ENCODE measurements at regions of chr9 and their contacts with region 1.

Region 1: DNA sequence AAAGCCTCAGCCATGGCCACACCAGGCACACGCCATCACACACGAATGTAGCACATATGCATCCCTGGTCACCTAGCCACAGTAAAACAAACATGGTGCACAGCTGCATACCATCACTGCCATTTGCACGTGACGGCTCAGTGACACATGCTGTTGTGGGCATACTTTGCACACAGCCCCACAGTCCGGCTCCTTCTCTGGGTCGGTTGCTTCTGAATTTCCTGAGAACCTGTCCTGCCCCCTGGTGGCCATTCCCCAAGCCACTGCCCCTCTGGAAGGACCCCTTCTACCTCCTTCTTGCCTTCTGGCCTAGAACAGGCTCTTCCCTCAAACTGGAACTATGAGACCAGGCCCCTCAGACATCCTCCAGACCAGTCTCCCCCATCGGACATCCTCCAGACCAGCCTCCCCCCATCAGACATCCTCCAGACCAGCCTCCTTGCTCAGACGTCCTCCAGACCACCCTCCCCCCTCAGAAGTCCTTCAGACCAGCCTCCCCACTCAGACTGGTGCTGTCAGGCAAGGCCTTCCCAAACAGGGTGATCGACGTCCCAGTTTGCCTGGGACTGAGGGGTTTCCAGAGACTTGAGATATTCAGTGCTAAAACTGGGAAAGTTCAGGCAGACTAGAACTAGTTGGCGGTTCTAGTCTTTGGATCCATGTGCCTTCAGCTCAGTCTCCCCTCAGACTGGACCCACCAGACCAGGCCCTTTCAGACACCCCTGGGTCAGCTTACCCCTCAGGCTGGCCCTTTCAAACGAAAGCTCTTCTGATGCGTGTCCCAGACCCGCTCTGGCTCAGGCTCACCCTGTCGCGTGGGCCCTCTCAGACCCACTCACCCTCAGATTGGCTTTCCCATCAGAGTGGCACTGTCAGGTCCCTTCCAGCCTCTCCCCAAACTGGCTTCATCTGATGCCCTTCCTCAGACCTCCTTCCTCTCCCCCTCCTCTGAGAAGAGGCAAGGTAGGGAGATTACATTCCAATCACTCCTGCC is 24.3 kb upstream of the ENHO start:
- DNase-seq: peak; percentile 78
- ATAC-seq: peak; percentile 83
- H3K4me3 ChIP-seq: no peak overlapping the region
- H3K27ac ChIP-seq: no peak overlapping the region
- H3K4me1 ChIP-seq: peaks cover 0 to 4% of the 10 kb centered on the region in 2 experiments; a peak in 2 of 4 replicates
- H3K27me3 ChIP-seq: no peaks in the 10 kb centered on the region
- CTCF ChIP-seq: peak; percentile 75 to 87 (median 86); a peak in 5 of 6 replicates
- POLR2A ChIP-seq: no peak
- RAD21 ChIP-seq: peak; percentile 77

Region 2: DNA sequence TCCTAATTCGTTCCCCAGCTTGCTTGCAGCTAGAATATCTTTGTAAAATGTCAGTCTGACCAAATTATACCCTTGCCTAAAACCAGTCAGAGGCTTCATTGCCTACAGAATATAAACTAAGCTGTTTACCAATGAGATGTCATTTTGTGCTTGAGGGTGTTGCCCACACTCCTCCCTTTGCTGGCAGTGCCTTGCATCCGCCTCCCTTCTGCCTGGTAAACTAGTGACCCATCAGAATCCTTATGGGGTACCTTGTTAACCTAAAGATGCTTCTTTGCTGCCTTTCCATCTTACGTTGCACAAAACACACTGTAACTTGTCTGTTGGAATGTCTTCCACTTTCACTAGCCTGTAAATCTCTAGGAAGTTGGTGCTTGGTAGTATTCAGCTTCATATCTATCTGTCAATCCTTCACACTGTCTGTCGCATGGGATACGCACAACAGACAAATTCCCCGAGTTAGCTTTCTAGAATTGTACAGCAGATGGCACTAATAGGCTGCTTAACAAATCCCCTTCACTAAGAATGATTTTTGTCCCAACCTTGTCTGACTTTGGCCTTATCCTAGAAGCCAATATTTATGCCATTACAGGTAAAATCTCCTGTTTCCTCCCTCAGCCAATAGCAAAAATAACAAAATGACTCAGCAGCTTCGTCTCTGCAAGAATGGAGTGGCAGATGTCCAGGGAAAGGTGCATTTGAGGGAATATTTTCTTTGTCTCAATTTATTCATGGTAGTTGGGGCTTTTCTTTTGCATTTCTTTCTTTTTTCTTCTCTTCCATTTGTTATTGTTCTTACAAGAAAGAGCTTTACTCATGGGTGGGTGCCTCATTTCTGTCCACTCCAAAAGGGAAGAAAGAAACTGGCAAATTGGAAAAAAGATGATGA is 214.8 kb before region 1 on chr9:
- CTCF ChIA-PET with region 1: no interaction called
- POLR2A ChIA-PET with region 1: no interaction called
- RAD21 ChIA-PET with region 1: no interaction called
- intact Hi-C with region 1: loop called (anchors 5 kb)
- DNase-seq: peak; percentile 28
- ATAC-seq: no peak
- H3K4me3 ChIP-seq: no peak overlapping the region
- H3K27ac ChIP-seq: no peak overlapping the region
- H3K4me1 ChIP-seq: peaks cover 8 to 23% of the 10 kb centered on the region in 2 experiments; a peak in 3 of 4 replicates
- H3K27me3 ChIP-seq: no peaks in the 10 kb centered on the region
- CTCF ChIP-seq: peak; percentile 40 to 71 (median 58)
- POLR2A ChIP-seq: no peak
- RAD21 ChIP-seq: peak; percentile 81

Region 3: GRCh38 chr9:34403554-34404380 is 143.4 kb before region 1 on chr9:
- CTCF ChIA-PET with region 1: interaction called, 16 read pairs
- POLR2A ChIA-PET with region 1: no interaction called
- RAD21 ChIA-PET with region 1: interaction called in 1 of 2 experiments, 4 read pairs
- intact Hi-C with region 1: no loop called
- DNase-seq: peak; percentile 39
- ATAC-seq: peak; percentile 83
- H3K4me3 ChIP-seq: no peak overlapping the region
- H3K27ac ChIP-seq: no peak overlapping the region
- H3K4me1 ChIP-seq: 0 out of 4 replicates have a peak, but pooled peaks cover 0 to 4% of the 10 kb centered on the region in 2 experiments
- H3K27me3 ChIP-seq: no peaks in the 10 kb centered on the region
- CTCF ChIP-seq: peak; percentile 95 to 99 (median 99)
- POLR2A ChIP-seq: no peak
- RAD21 ChIP-seq: peak; percentile 81

Region 4: GRCh38 chr9:34437006-34437925 is 109.9 kb before region 1 on chr9:
- CTCF ChIA-PET with region 1: interaction called, 7 read pairs
- POLR2A ChIA-PET with region 1: no interaction called
- RAD21 ChIA-PET with region 1: no interaction called
- intact Hi-C with region 1: loop called (anchors 1 kb)
- DNase-seq: peak; percentile 67
- ATAC-seq: peak; percentile 96
- H3K4me3 ChIP-seq: no peak overlapping the region
- H3K27ac ChIP-seq: no peak overlapping the region
- H3K4me1 ChIP-seq: no peaks in the 10 kb centered on the region; a peak in 1 of 4 replicates
- H3K27me3 ChIP-seq: no peaks in the 10 kb centered on the region
- CTCF ChIP-seq: peak; percentile 75 to 90 (median 82)
- POLR2A ChIP-seq: no peak
- RAD21 ChIP-seq: peak; percentile 93

Region 5: GRCh38 chr9:34577400-34578240 is 30.5 kb after region 1 on chr9:
- CTCF ChIA-PET with region 1: no interaction called
- POLR2A ChIA-PET with region 1: no interaction called
- RAD21 ChIA-PET with region 1: no interaction called
- intact Hi-C with region 1: no loop called
- DNase-seq: no peak
- ATAC-seq: no peak
- H3K4me3 ChIP-seq: no peak overlapping the region
- H3K27ac ChIP-seq: no peak overlapping the region
- H3K4me1 ChIP-seq: no peaks in the 10 kb centered on the region
- H3K27me3 ChIP-seq: no peaks in the 10 kb centered on the region
- CTCF ChIP-seq: no peak
- POLR2A ChIP-seq: no peak
- RAD21 ChIP-seq: no peak

Region 6: GRCh38 chr9:34591248-34591916 is 44.3 kb after region 1 on chr9:
- CTCF ChIA-PET with region 1: interaction called, 47 read pairs
- POLR2A ChIA-PET with region 1: no interaction called
- RAD21 ChIA-PET with region 1: interaction called, 6 to 8 read pairs
- intact Hi-C with region 1: loop called (anchors 1 kb)
- DNase-seq: peak; percentile 33
- ATAC-seq: peak; percentile 98
- H3K4me3 ChIP-seq: no peak overlapping the region
- H3K27ac ChIP-seq: no peak overlapping the region
- H3K4me1 ChIP-seq: peaks cover 0 to 8% of the 10 kb centered on the region in 2 experiments; a peak in 2 of 4 replicates
- H3K27me3 ChIP-seq: peaks cover 7% of the 10 kb centered on the region; the same call in 1 of the 2 replicates
- CTCF ChIP-seq: peak; percentile 81 to 92 (median 90)
- POLR2A ChIP-seq: no peak
- RAD21 ChIP-seq: peak; percentile 93

Region 7: GRCh38 chr9:34603610-34604231 is 56.6 kb after region 1 on chr9:
- CTCF ChIA-PET with region 1: interaction called, 8 read pairs
- POLR2A ChIA-PET with region 1: no interaction called
- RAD21 ChIA-PET with region 1: interaction called, 3 to 4 read pairs
- intact Hi-C with region 1: loop called (anchors 2 kb)
- DNase-seq: peak; percentile 42
- ATAC-seq: peak; percentile 98
- H3K4me3 ChIP-seq: no peak overlapping the region
- H3K27ac ChIP-seq: no peak overlapping the region
- H3K4me1 ChIP-seq: peaks cover 0 to 10% of the 10 kb centered on the region in 2 experiments; a peak in 1 of 4 replicates
- H3K27me3 ChIP-seq: no peaks in the 10 kb centered on the region
- CTCF ChIP-seq: peak; percentile 84 to 99 (median 91); a peak in 5 of 6 replicates
- POLR2A ChIP-seq: no peak
- RAD21 ChIP-seq: peak; percentile 94

Region 8: DNA sequence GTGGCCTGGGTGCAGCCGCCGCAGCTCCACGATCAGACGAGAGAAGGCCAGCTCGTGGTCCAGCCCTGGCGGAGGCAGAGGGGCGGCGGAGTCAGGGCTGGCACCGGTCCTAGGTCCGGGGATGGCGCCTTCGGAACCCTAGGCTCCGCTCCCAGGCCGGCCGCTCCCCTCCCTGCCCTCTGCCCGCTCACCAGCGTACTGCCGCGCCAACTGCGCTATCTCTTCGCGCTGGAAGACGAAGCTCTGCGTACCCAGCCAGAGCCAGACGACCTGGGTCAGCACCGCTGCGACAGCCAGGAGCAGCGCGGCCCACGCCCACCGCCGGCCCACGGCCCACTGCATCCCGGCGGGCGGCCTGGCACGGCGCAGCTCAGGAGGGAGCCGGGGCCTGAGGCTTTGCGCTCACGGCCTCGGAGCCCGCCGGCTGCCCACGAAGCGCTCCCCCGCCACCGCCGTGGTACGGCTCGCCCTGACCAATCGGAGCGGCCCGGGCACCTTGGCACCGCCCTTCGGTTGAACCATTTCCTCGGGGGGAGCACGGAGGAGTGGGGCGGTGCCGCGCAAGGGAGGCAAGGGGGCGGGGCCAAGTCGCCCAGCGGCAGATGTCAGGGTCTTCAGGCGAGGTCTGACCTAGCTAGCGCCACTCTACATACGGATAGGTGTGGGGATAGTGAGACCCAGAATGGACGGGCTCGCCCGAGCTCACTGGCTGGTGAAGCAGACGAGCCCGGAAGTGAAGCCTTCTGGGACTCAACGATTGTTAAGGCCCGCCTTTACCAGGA is 90.4 kb after region 1 on chr9 and contains the start of gene SIGMAR1:
- CTCF ChIA-PET with region 1: interaction called, 8 read pairs
- POLR2A ChIA-PET with region 1: no interaction called
- RAD21 ChIA-PET with region 1: no interaction called
- intact Hi-C with region 1: loop called (anchors 1 kb)
- DNase-seq: peak; percentile 84
- ATAC-seq: peak; percentile 86
- H3K4me3 ChIP-seq: peak within 1 kb of the TSS; percentile 94
- H3K27ac ChIP-seq: peak within 1 kb of the TSS; percentile 85
- H3K4me1 ChIP-seq: peaks cover 15 to 38% of the 10 kb centered on the region in 2 experiments; a peak in 3 of 4 replicates
- H3K27me3 ChIP-seq: no peaks in the 10 kb centered on the region
- CTCF ChIP-seq: no peak
- POLR2A ChIP-seq: peak; percentile 92
- RAD21 ChIP-seq: no peak
- total RNA-seq, gene SIGMAR1: 109 TPM

Measured in HCT116 (cell line).